ENCODE measurements at regions of chr16 and their contacts with region 1.

Region 1: GRCh38 chr16:88743693-88744576 is 37.6 kb downstream of the CTU2 start:
- DNase-seq: no peak
- ATAC-seq: peak; percentile 56
- H3K4me3 ChIP-seq: no peak overlapping the region
- H3K27ac ChIP-seq: no peak overlapping the region
- H3K4me1 ChIP-seq: peaks cover 11% of the 10 kb centered on the region
- H3K27me3 ChIP-seq: no peaks in the 10 kb centered on the region
- CTCF ChIP-seq: peak; percentile 72 to 85 (median 80)
- EP300 ChIP-seq: no peak
- POLR2A ChIP-seq: no peak
- RAD21 ChIP-seq: peak; percentile 49

Region 2: DNA sequence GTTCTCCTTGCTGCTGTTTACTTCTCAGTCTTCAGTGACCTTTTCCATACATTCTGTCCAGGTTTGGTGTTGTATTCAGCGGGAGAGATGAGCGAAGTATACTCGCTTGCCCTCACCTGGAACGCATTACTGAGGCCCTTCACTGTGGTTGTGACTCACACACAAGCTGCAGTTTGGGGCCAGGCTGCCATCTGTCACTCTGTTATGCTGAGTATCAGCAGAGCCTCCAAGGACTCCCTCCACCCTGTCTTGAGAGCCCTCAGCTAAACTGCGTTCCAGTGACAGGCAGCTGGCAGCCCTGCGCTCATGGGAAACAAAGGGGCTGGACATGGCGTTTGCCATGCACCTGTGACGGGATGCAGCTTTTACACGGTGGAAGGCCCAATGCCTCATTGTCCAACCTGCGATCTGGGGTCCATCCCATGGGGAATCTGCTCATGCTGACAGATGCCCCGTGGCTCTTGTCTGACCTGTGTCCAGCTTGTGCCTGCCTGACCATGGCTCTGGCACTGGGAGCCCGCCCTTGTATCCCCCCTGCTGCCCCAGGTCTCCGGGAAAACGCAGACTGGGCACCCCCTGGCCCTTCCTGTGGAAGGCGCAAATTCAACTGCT is 467.1 kb after region 1 on chr16:
- CTCF ChIA-PET with region 1: interaction called, 5 read pairs
- POLR2A ChIA-PET with region 1: no interaction called
- RAD21 ChIA-PET with region 1: no interaction called
- SMC1A ChIA-PET with region 1: no interaction called
- in situ Hi-C with region 1: loop called (anchors 5 kb)
- intact Hi-C with region 1: loop called (anchors 10 kb)
- DNase-seq: no peak
- ATAC-seq: no peak
- H3K4me3 ChIP-seq: no peak overlapping the region
- H3K27ac ChIP-seq: no peak overlapping the region
- H3K4me1 ChIP-seq: 0 out of 2 replicates have a peak, but pooled peaks cover 3% of the 10 kb centered on the region
- H3K27me3 ChIP-seq: peaks cover 0 to 2% of the 10 kb centered on the region in 2 experiments; a peak in 1 of 4 replicates
- CTCF ChIP-seq: no peak
- EP300 ChIP-seq: no peak
- POLR2A ChIP-seq: no peak
- RAD21 ChIP-seq: no peak

Measured in GM12878 (cell line).